IMR-90 (cell line): ENCODE measurements at regions of chr16 and their contacts with region 1.

Region 1: DNA sequence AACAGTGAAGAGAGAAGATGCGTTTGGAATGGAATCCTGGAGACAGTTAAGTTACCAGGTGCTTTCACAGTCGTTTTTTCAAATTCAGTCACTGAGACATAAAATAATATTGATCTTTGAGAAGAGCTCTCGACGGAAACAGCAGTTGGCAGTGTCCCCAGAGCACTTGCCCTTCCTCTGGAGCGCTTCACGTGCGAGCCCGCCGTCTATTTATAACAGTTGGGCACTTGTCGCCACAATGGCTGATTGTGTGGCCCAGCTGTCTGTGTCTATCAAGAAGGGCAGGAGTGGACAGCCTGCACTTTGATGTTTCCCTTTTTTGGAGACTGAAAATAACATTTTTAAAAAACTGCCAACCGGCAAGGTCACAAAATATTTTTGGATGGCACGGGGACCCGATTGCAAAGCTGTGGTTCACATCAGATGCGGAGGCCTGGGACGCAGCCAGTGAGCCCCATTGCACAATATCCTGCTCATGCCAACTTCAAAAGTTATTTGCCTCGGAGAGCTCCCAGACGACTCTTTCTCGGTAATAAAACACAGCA is 62.9 kb downstream of the ADCY9 start:
- DNase-seq: no peak
- ATAC-seq: peak; percentile 12
- H3K4me3 ChIP-seq: peak overlapping the region; percentile 1; the same call in 1 of the 2 replicates
- H3K27ac ChIP-seq: peak overlapping the region; percentile 85
- H3K4me1 ChIP-seq: peaks cover 17% of the 10 kb centered on the region
- H3K27me3 ChIP-seq: no peaks in the 10 kb centered on the region
- CTCF ChIP-seq: no peak
- POLR2A ChIP-seq: no peak
- RAD21 ChIP-seq: no peak

Region 2: GRCh38 chr16:3988824-3989223 is 64.5 kb before region 1 on chr16:
- CTCF ChIA-PET with region 1: no interaction called
- POLR2A ChIA-PET with region 1: no interaction called
- dilution Hi-C with region 1: no loop called
- in situ Hi-C with region 1: no loop called
- intact Hi-C with region 1: no loop called
- DNase-seq: no peak
- ATAC-seq: no peak
- H3K4me3 ChIP-seq: no peak overlapping the region
- H3K27ac ChIP-seq: no peak overlapping the region
- H3K4me1 ChIP-seq: no peaks in the 10 kb centered on the region
- H3K27me3 ChIP-seq: no peaks in the 10 kb centered on the region
- CTCF ChIP-seq: no peak
- POLR2A ChIP-seq: no peak
- RAD21 ChIP-seq: no peak

Region 3: GRCh38 chr16:3999479-4000325 is 53.7 kb before region 1 on chr16:
- CTCF ChIA-PET with region 1: interaction called, 6 read pairs
- POLR2A ChIA-PET with region 1: no interaction called
- dilution Hi-C with region 1: no loop called
- in situ Hi-C with region 1: no loop called
- intact Hi-C with region 1: loop called (anchors 5 kb)
- DNase-seq: peak; percentile 81
- ATAC-seq: peak; percentile 91
- H3K4me3 ChIP-seq: no peak overlapping the region
- H3K27ac ChIP-seq: peak overlapping the region; percentile 90; the same call in 1 of the 2 replicates
- H3K4me1 ChIP-seq: peaks cover 19% of the 10 kb centered on the region
- H3K27me3 ChIP-seq: no peaks in the 10 kb centered on the region
- CTCF ChIP-seq: no peak
- POLR2A ChIP-seq: no peak
- RAD21 ChIP-seq: 0 out of 2 replicates have a peak, but pooled peaks have one; percentile 15

Region 4: DNA sequence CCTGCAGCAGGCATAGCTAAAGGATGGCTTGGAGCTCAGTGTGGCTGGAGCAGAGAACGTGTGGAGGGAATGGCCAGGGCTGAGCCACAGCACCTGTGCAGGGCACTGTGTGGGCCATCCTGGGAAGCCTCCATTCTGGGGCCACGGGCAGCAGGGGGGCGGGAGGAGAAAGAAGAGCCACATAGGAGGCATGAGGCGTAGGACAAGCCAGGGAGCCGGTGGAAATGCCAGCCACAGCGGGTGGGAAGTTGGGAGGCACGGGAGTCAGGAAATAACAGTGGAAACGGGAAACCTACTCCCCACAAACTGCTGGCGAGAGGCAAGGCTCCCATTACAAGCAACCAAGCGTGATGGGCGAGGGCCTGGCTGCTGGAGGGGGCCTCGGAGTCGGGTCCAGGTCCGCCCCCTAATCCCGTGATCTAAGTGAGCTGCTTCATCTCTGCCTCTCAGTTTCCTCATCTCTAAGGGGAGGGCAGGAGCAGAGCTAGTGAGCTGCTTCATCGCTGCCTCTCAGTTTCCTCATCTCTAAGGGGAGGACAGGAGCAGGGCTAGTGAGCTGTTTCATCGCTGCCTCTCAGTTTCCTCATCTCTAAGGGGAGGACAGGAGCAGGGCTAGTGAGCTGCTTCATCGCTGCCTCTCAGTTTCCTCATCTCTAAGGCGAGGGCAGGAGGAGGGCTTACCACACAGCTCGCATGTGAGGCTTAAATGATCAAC is 42.0 kb before region 1 on chr16:
- CTCF ChIA-PET with region 1: no interaction called
- POLR2A ChIA-PET with region 1: no interaction called
- dilution Hi-C with region 1: no loop called
- in situ Hi-C with region 1: no loop called
- intact Hi-C with region 1: loop called (anchors 5 kb)
- DNase-seq: no peak
- ATAC-seq: no peak
- H3K4me3 ChIP-seq: no peak overlapping the region
- H3K27ac ChIP-seq: peak overlapping the region; percentile 40; the same call in 1 of the 2 replicates
- H3K4me1 ChIP-seq: peaks cover 22% of the 10 kb centered on the region
- H3K27me3 ChIP-seq: no peaks in the 10 kb centered on the region
- CTCF ChIP-seq: no peak
- POLR2A ChIP-seq: no peak
- RAD21 ChIP-seq: no peak

Region 5: GRCh38 chr16:4097811-4098240 is 44.5 kb after region 1 on chr16:
- CTCF ChIA-PET with region 1: no interaction called
- POLR2A ChIA-PET with region 1: no interaction called
- dilution Hi-C with region 1: no loop called
- in situ Hi-C with region 1: no loop called
- intact Hi-C with region 1: loop called (anchors 5 kb)
- DNase-seq: peak; percentile 70
- ATAC-seq: peak; percentile 78
- H3K4me3 ChIP-seq: no peak overlapping the region
- H3K27ac ChIP-seq: peak overlapping the region; percentile 75
- H3K4me1 ChIP-seq: peaks cover 9% of the 10 kb centered on the region
- H3K27me3 ChIP-seq: no peaks in the 10 kb centered on the region
- CTCF ChIP-seq: no peak
- POLR2A ChIP-seq: no peak
- RAD21 ChIP-seq: no peak; the same call in 1 of the 2 replicates